Activated CD8-positive, alpha-beta memory T cell treated with anti-CD3 and anti-CD28 coated beads, Interleukin-2, amount 10 ng/mL, durations not matched to agents 7 days and 5 days (primary cell): ENCODE measurements at regions of chr11 and their contacts with region 1.

Region 1: DNA sequence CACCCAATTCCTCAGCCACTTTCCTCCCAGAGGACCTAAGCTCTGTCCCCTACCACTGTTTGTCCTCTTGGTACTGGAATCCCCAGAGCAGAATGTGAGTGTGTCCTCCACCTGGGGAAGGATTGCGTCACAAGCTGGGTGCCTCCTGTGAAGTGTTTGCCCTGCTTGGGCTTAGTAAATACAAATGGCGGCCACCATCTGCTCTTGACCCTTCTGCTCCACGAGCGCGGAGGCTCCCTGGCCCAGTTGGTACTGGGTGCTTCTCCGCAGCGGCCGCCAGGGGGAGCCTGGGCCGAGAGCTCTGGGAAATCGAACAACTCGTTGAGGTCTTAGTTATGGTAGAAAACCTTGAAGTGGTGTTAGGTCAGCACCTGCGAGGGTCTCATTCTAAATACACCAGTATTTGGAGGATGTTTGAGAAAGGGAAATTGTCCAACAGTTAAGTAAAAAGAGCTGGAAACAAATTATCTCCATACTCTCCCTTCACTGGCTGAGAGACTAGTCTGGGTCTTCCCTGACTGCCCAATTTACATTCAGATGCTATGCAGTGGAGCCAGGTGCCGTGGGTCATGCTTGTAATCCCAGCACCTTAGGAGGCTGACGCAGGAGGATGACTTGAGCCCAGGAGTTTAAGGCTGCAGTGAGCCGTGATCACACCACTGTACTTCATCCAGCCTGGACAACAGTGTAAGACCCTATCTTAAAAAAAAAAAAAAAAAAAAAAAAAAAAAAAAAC is 74.6 kb upstream of the TEAD1 start:
- DNase-seq: peak; percentile 53
- ATAC-seq: no peak
- H3K4me3 Mint-ChIP-seq: no peak overlapping the region
- H3K27ac Mint-ChIP-seq: no peak overlapping the region
- H3K4me1 Mint-ChIP-seq: peaks cover 3% of the 10 kb centered on the region
- H3K27me3 Mint-ChIP-seq: peaks cover 19% of the 10 kb centered on the region

Region 2: GRCh38 chr11:12587333-12587991 is 12.1 kb before region 1 on chr11:
- CTCF ChIA-PET with region 1: interaction called, 14 read pairs
- DNase-seq: no peak
- ATAC-seq: no peak
- H3K4me3 Mint-ChIP-seq: no peak overlapping the region
- H3K27ac Mint-ChIP-seq: no peak overlapping the region
- H3K4me1 Mint-ChIP-seq: no peaks in the 10 kb centered on the region
- H3K27me3 Mint-ChIP-seq: peaks cover 17% of the 10 kb centered on the region

Region 3: GRCh38 chr11:12888525-12889158 is 289.1 kb after region 1 on chr11:
- CTCF ChIA-PET with region 1: interaction called, 40 read pairs
- DNase-seq: peak; percentile 75
- ATAC-seq: peak; percentile 75
- H3K4me3 Mint-ChIP-seq: no peak overlapping the region
- H3K27ac Mint-ChIP-seq: no peak overlapping the region
- H3K4me1 Mint-ChIP-seq: no peaks in the 10 kb centered on the region
- H3K27me3 Mint-ChIP-seq: peaks cover 16% of the 10 kb centered on the region